Posterior cingulate gyrus (tissue), 11 donors: ENCODE measurements at regions of chr4 and their contacts with region 1.

Region 1: GRCh38 chr4:88514557-88515511 is 8.7 kb downstream of the PYURF start:
- DNase-seq: no peak

Region 2: DNA sequence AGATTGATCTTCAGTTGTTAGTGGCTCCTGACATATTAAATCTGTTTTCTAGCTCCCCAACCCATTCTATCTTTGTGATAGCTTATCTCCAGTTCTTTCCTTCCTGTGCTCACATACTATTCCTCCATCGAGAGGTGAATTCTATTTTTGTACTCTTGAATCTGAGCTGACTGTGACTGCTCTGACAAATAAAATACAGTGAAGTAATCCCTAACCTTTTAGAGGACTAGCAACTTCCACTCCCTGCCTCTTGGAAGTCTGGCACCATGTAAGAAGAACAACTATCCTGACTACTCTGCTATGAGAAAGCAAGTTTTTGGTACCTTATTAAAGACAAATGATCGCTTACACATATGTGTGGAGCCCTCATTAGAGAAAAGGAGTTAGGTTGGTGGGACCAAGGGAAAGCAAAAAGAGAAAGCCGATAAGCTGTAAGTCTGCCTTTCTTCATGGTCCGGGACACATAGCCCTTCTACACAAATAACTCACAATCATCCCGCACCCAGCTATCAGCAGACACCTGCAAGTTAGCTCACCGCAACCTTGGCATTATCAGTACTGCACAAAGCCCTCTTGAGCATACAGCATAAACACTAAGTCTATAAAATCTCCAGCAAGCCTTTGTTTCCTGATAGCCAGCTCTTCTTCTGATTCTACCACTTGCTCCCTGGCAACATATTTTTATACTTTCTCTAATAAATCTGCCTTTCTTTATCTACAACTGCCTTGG is 216.9 kb before region 1 on chr4:
- intact Hi-C with region 1: no loop called
- DNase-seq: no peak

Region 3: DNA sequence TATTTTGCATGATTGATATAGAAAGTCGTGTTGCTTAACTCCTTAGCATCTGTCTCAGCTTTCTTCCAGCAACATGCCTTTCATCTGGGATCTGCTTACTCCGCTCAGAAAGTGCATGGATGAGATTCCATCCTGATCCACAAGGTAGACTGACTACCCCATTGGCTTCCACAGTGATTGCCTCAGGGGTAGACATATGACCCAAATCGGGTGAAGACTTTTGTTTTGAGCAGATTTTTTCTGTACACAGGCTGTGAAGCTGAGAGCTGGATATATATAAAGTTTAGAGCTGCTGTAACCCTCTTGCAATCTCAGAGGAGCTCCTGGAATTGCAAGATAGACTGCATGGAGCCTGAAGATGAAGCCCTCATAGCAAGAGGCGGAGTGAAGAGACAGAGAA is 144.9 kb before region 1 on chr4:
- intact Hi-C with region 1: loop called (anchors 2 kb)
- DNase-seq: no peak

Region 4: DNA sequence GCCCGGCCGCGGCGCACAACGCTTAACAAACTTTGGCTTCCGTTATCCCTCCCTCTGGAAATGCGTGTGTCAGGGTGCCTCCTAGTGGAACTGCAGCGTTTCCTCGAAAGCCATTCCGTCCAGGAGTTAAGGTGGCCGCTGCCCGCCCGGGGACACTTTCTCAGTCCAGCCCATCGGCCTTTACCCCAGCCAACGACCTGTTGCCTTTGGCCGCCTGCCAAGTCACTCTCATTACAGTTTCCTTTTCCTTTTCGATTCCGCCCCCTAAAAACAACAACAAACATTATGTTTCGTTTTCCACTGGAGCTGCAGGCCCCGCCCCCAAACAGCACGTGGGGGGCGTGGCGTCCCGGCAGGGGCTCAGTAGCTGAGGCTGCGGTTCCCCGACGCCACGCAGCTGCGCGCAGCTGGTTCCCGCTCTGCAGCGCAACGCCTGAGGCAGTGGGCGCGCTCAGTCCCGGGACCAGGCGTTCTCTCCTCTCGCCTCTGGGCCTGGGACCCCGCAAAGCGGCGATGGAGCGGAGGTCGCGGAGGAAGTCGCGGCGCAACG is 58.0 kb before region 1 on chr4 and contains the start of gene HERC5:
- intact Hi-C with region 1: loop called (anchors 5 kb)
- DNase-seq: peak; percentile 52 to 96 (median 72)